ENCODE measurements at regions of chr11 and their contacts with region 1.

Region 1: DNA sequence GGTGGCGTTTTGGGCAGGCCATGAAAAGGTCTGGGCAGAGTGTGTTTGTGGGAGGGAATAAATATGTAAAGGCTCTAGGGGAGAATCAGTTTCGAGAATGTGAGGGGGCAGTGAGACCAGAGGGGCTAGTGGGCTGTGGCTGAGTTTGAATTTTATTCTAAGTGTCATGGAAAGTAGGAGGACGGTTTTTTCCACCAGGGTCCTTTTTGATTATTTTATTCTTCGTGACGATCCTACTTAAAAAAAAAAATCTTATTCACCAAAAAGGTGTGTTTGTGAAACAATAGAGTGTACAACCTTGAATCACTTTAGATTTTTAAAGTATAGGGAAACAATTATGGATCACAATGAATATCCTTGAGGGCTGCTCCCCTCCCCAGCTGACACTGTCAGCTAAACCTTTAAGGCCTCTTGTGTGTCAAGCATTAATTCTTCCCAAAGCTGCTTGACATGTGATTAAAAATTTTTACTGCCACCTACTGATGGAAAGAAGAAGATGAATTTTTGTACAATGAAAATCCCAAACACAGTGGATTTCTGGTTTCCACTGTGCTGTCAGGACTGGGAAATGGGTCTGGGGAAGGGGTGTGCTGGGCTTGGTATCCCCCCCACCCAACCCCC is 107.5 kb upstream of the OR4B1 start:
- DNase-seq: no peak

Region 2: DNA sequence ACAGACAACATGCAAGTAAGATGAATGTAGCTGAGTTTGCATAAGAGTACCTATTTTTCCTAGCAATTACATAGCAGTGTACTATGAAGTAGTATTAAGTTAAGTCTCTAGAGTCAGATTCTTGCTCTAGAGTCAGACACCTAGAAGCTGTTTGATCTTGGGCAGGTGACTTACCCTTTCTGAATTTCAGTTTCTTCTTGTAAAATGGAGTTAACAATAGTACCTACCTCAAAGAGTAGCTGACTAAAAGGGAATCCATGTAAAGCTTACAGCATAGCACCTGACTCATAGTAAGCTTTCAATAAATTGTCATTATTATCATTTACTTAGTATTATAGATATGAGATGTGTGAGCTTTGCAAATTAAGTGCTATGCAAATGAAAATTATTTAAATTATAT is 176.6 kb before region 1 on chr11:
- intact Hi-C with region 1: loop called (anchors 1 kb)
- DNase-seq: no peak

Region 3: GRCh38 chr11:47946682-47947575 is 162.2 kb before region 1 on chr11:
- intact Hi-C with region 1: loop called (anchors 5 kb)
- DNase-seq: peak; percentile 89